ENCODE measurements at regions of chr6 and their contacts with region 1.

Region 1: GRCh38 chr6:70107852-70108629 is 194.8 kb downstream of the COL9A1 start:
- DNase-seq: no peak
- ATAC-seq: no peak
- H3K4me3 ChIP-seq: no peak overlapping the region
- H3K27ac ChIP-seq: no peak overlapping the region
- H3K4me1 ChIP-seq: no peaks in the 10 kb centered on the region
- H3K27me3 ChIP-seq: peaks cover 0 to 2% of the 10 kb centered on the region in 2 donors

Region 2: DNA sequence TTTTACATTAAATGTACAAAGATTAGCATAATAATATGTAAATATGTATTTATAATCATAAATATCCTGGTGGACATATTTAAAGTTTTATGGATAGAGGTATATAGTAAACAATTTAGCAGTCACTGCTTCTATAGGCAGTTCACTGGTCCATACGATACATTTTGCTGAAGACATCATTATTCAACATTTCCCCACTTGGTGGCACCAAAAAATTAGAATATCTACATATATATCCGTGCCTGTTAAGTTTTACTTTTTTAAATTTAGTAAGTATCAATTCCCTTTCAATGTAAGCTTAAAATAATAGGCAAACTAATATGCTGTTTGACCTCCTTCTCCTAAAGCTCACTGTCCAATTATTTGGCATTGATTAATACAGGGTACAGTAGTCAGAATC is 375.4 kb before region 1 on chr6:
- intact Hi-C with region 1: loop called (anchors 10 kb)
- DNase-seq: no peak
- ATAC-seq: no peak
- H3K4me3 ChIP-seq: no peak overlapping the region
- H3K27ac ChIP-seq: no peak overlapping the region
- H3K4me1 ChIP-seq: no peaks in the 10 kb centered on the region
- H3K27me3 ChIP-seq: no peaks in the 10 kb centered on the region

Region 3: DNA sequence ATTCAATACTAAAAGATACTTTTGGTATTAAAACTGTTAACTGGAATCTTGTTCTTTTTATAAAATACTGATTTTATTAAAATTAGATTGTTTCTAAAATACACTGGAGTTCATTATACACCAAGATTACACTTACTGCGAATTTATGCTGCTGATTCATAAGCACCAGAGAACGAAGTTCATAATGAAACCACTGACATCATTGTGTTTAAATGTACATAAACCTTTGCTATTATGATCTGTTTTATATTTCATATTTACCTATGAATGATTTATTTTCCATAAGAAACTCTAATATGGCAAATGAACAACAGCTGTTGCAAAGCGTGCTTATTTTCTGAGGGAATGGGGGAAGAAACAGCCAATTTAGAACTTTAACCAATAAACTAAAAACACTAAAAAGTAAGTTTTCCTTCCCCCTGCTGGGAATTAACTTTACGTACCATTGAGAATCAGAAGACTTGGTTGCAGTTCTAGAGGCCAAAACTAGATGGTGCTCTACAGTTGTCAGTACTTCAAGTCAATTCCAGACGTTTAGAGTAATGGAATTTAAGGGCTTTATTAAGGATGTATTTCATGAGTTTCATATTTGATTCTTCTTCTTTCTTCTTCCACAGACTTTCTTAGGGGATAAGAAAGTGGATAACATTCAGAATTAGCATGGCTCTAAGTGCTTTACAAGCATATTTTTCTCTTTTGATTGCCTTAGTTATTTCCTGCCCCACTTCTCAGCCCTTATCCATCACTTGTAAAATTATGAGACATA is 272.4 kb before region 1 on chr6:
- intact Hi-C with region 1: loop called (anchors 2 to 5 kb)
- DNase-seq: no peak
- ATAC-seq: peak; percentile 78
- H3K4me3 ChIP-seq: no peak overlapping the region
- H3K27ac ChIP-seq: no peak overlapping the region
- H3K4me1 ChIP-seq: no peaks in the 10 kb centered on the region
- H3K27me3 ChIP-seq: no peaks in the 10 kb centered on the region